ENCODE measurements at regions of chr12 and their contacts with region 1.

Region 1: GRCh38 chr12:3299929-3300832 is 190.8 kb upstream of the PRMT8 start:
- ATAC-seq: peak; percentile 69 to 84 (median 81)
- H3K4me3 ChIP-seq: no peak overlapping the region
- H3K27ac ChIP-seq: no peak overlapping the region
- H3K4me1 ChIP-seq: peaks cover 10 to 18% of the 10 kb centered on the region in 2 donors

Region 2: GRCh38 chr12:3004655-3005565 is 295.3 kb before region 1 on chr12:
- in situ Hi-C with region 1: no loop called
- ATAC-seq: peak in 3 of 8 experiments; percentile 2 to 52 (median 10)
- H3K4me3 ChIP-seq: no peak overlapping the region
- H3K27ac ChIP-seq: no peak overlapping the region
- H3K4me1 ChIP-seq: peaks cover 6 to 10% of the 10 kb centered on the region in 2 donors

Region 3: DNA sequence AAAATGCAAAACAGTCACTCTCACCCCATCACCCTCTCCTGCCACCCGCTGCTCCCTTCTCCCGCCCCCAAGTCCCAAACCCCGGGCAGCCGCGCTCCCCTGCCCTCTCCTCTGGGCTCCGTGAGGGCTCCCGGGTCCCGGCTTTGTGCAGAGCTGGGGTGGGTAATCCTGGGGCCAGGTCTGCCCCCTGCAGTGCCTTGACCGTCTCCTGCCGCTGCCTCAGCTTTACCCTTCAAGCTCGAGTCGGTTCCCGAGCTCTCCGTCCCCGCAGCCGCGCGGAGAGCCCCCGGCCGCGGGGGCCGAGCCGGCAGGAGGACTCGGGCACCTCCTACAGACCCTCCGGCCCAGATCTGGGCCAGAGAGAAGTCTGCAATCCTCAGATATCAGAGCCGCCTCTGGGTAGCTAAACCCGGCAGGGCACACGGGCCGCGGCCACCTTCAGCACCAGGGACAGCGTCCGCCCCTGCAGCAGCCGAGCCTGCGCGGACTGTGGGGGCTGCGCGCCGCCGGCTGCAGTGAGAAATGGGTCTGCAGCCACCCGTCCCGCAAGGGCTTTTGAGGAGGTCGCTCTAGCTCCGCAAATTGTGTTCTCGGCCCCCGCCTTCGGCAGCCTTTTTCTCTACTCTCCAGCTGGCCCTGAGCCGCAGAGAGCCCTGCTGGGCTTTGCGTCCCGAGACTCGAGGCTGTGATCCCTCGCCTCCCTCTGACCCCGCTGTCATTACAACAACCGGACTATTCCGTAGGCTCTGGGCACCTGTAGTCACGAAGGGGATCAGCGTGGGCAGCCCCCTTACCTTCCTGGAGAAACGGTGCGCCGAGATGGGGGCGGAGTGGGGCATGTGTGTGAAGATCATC is 192.0 kb after region 1 on chr12:
- in situ Hi-C with region 1: loop called in 1 of 9 experiments (anchors 25 kb)
- ATAC-seq: peak; percentile 67 to 99 (median 72)
- H3K4me3 ChIP-seq: peak overlapping the region; percentile 60 to 88 (median 62)
- H3K27ac ChIP-seq: peak overlapping the region; percentile 46 to 53
- H3K4me1 ChIP-seq: peaks cover 16 to 20% of the 10 kb centered on the region in 2 donors

Region 4: GRCh38 chr12:3658327-3659163 is 358.4 kb after region 1 on chr12:
- in situ Hi-C with region 1: loop called in 2 of 9 experiments (anchors 25 kb)
- ATAC-seq: peak in 2 of 8 experiments; percentile 58 to 74
- H3K4me3 ChIP-seq: no peak overlapping the region
- H3K27ac ChIP-seq: no peak overlapping the region
- H3K4me1 ChIP-seq: peaks cover 63% of the 10 kb centered on the region in 2 donors

Region 5: GRCh38 chr12:3777206-3777809 is 477.1 kb after region 1 on chr12:
- in situ Hi-C with region 1: loop called in 4 of 9 experiments (anchors 25 kb)
- ATAC-seq: peak in 6 of 8 experiments; percentile 46 to 71 (median 61)
- H3K4me3 ChIP-seq: no peak overlapping the region
- H3K27ac ChIP-seq: no peak overlapping the region
- H3K4me1 ChIP-seq: no peaks in the 10 kb centered on the region

Region 6: DNA sequence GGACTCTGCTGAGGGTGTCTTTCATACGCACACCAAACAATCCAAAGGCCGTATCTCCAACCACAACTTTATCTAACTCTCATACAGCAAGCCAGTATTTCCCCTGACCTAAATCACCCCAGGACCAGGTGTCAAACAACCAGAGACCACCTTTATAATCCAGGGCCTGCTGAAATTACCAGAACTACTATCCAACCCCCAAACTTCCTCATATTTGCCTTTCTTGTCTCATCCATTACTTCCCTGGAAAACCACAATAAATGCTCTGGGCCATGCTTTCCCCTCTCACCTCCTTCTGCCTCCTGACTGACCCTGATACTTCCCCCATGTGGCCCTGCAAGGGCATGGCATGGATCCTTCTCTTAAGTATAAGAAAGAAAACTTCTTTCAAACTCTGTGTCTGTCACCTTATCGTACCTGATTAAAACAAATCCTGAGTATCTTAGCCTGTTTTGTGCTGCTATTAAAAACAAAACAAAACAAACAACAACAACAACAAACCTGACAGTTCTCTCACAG is 497.4 kb after region 1 on chr12:
- in situ Hi-C with region 1: loop called in 5 of 9 experiments (anchors 10 to 25 kb)
- ATAC-seq: no peak
- H3K4me3 ChIP-seq: no peak overlapping the region
- H3K27ac ChIP-seq: no peak overlapping the region
- H3K4me1 ChIP-seq: peaks cover 31 to 35% of the 10 kb centered on the region in 2 donors